ENCODE measurements at regions of chr7 and their contacts with region 1.

Region 1: GRCh38 chr7:129150199-129150996 is 5.9 kb downstream of the TSPAN33 start:
- DNase-seq: no peak
- H3K4me3 ChIP-seq: no peak overlapping the region
- H3K27ac ChIP-seq: no peak overlapping the region
- H3K4me1 ChIP-seq: peaks cover 26% of the 10 kb centered on the region
- CTCF ChIP-seq: no peak

Region 2: GRCh38 chr7:129163875-129164544 is 13.6 kb after region 1 on chr7:
- CTCF ChIA-PET with region 1: interaction called, 10 read pairs
- POLR2A ChIA-PET with region 1: interaction called, 5 read pairs
- intact Hi-C with region 1: loop called (anchors 2 kb)
- DNase-seq: peak; percentile 69
- H3K4me3 ChIP-seq: no peak overlapping the region
- H3K27ac ChIP-seq: no peak overlapping the region
- H3K4me1 ChIP-seq: peaks cover 51% of the 10 kb centered on the region
- CTCF ChIP-seq: peak; percentile 98

Measured in OCI-LY7 (cell line).